Sigmoid colon (tissue), 7 donors: ENCODE measurements at regions of chr13 and their contacts with region 1.

Region 1: GRCh38 chr13:51452361-51453206 is at the start of gene INTS6:
- DNase-seq: peak; percentile 100
- H3K4me3 ChIP-seq: peak within 1 kb of the TSS; percentile 87 to 97 (median 92)
- H3K27ac ChIP-seq: peak within 1 kb of the TSS; percentile 99 to 100 (median 100)
- H3K4me1 ChIP-seq: peaks cover 0 to 38% (median 28%) of the 10 kb centered on the region in 4 donors
- H3K27me3 ChIP-seq: no peaks in the 10 kb centered on the region
- CTCF ChIP-seq: no peak
- EP300 ChIP-seq: no peak
- POLR2A ChIP-seq: peak; percentile 99 to 100
- total RNA-seq, gene INTS6: 30.0 to 43.3 (median 35.1) TPM

Region 2: DNA sequence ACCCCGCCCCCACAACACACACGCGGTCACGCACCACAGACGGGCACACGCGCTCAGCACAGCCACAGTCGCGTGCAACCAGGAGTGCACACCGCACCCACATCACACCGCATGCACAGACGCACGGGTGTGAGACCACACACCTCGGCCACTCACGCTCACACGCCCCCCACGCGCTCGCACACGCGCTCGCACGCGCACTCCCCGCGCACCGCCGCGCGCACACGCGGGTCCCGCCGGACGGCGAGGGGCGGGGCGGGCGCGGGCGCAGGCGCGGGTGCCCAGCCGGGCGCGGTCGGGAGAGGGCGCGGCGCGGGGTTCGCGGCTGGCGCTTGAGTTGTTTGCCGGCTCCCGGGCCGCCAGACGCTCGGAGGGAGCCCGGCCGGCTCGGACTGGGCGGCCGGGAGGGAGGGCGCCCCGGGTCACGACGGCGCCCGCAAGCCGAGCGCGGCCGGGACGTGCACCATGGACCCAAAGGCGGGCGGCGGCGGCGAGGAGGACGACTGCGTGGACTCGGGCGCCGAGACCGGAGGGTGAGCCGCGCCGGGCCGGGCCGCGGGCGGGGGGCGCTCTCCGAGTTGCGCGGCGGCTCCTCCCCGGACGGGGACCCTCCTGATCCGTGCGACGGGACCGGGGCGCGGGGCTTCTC is 230.4 kb before region 1 on chr13 and contains the start of gene FAM124A:
- intact Hi-C with region 1: loop called (anchors 2 kb)
- DNase-seq: peak; percentile 75
- H3K4me3 ChIP-seq: peak within 1 kb of the TSS; percentile 71 to 97 (median 92)
- H3K27ac ChIP-seq: peak within 1 kb of the TSS; percentile 77 to 93 (median 88)
- H3K4me1 ChIP-seq: peaks cover 0 to 44% (median 35%) of the 10 kb centered on the region in 4 donors
- H3K27me3 ChIP-seq: no peaks in the 10 kb centered on the region
- CTCF ChIP-seq: no peak
- EP300 ChIP-seq: no peak
- POLR2A ChIP-seq: no peak
- total RNA-seq, gene FAM124A: 11.7 to 18.3 (median 16.3) TPM

Region 3: DNA sequence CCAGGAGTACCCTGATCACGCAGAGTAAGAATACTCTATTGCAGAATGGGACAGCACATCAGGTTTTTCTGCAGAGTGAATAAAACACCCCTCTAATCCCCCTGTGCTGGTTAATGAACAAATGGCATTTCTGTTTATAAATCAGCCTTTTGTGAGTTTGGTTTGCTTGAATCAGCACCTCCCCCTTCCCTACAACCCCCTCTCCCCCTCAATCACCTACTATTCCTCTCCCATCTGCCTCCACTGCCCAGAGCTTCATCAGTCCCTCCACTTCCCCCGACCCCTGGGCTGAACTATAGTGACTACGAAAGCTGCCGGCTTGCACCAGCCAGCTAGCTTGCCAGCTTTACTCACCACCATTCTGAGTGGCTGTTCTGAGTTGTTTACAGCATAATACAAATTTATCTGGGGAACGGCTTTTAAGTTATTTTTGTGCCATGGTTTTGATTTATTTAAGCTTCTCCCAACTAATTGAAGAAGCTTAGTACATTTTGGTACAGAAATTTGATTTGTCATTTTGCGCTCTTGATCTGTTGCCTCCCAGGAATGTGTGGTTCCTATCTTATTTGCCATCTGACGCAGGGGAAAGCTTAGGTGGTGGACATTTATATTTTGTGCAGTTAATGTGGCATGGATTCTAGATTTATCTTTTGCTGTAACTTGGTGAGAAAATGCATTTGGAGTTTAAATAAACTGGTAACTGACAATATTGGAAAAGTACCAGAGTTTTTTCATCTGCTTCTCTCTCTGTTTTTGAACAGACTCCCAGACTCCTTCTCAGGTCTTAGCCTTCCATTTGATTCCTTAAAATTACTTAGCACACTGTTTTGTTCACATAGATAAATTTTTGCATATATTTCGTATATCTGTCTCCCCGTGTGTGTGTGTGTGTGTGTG is 90.0 kb after region 1 on chr13:
- intact Hi-C with region 1: loop called (anchors 5 kb)
- DNase-seq: no peak
- H3K4me3 ChIP-seq: peak overlapping the region in 2 of 4 donors; percentile 10 to 18
- H3K27ac ChIP-seq: peak overlapping the region; percentile 35 to 70 (median 66)
- H3K4me1 ChIP-seq: peaks cover 0 to 54% (median 47%) of the 10 kb centered on the region in 4 donors
- H3K27me3 ChIP-seq: no peaks in the 10 kb centered on the region
- CTCF ChIP-seq: no peak
- EP300 ChIP-seq: no peak
- POLR2A ChIP-seq: no peak

Region 4: GRCh38 chr13:51729866-51730546 is 277.4 kb after region 1 on chr13:
- intact Hi-C with region 1: loop called (anchors 2 kb)
- DNase-seq: peak; percentile 86
- H3K4me3 ChIP-seq: peak overlapping the region in 3 of 4 donors; percentile 3 to 26 (median 19)
- H3K27ac ChIP-seq: peak overlapping the region; percentile 63 to 79 (median 74)
- H3K4me1 ChIP-seq: peaks cover 0 to 36% (median 33%) of the 10 kb centered on the region in 4 donors
- H3K27me3 ChIP-seq: no peaks in the 10 kb centered on the region
- CTCF ChIP-seq: no peak
- EP300 ChIP-seq: no peak
- POLR2A ChIP-seq: no peak

Region 5: GRCh38 chr13:51803422-51804294 is 351.1 kb after region 1 on chr13 and contains the start of gene DHRS12:
- intact Hi-C with region 1: loop called (anchors 1 kb)
- DNase-seq: peak; percentile 97
- H3K4me3 ChIP-seq: peak within 1 kb of the TSS; percentile 52 to 83 (median 67)
- H3K27ac ChIP-seq: peak within 1 kb of the TSS; percentile 91 to 99 (median 97)
- H3K4me1 ChIP-seq: peaks cover 0 to 54% (median 45%) of the 10 kb centered on the region in 4 donors
- H3K27me3 ChIP-seq: no peaks in the 10 kb centered on the region
- CTCF ChIP-seq: no peak
- EP300 ChIP-seq: peak in 2 of 4 donors; percentile 31 to 45
- POLR2A ChIP-seq: peak; percentile 83 to 86
- total RNA-seq, gene DHRS12: 11.4 to 26.9 (median 14.9) TPM

Region 6: GRCh38 chr13:52011632-52012511 is 559.3 kb after region 1 on chr13 and contains the start of gene ALG11:
- intact Hi-C with region 1: loop called (anchors 5 kb)
- DNase-seq: peak; percentile 99
- H3K4me3 ChIP-seq: peak within 1 kb of the TSS; percentile 67 to 92 (median 78)
- H3K27ac ChIP-seq: peak within 1 kb of the TSS; percentile 76 to 79 (median 77)
- H3K4me1 ChIP-seq: peaks cover 0 to 32% (median 19%) of the 10 kb centered on the region in 4 donors
- H3K27me3 ChIP-seq: no peaks in the 10 kb centered on the region
- CTCF ChIP-seq: no peak
- EP300 ChIP-seq: no peak
- POLR2A ChIP-seq: peak; percentile 61 to 65
- total RNA-seq, gene ALG11: 11.6 to 20.6 (median 17.4) TPM